MCF 10A (cell line): ENCODE measurements at regions of chr2 and their contacts with region 1.

Region 1: DNA sequence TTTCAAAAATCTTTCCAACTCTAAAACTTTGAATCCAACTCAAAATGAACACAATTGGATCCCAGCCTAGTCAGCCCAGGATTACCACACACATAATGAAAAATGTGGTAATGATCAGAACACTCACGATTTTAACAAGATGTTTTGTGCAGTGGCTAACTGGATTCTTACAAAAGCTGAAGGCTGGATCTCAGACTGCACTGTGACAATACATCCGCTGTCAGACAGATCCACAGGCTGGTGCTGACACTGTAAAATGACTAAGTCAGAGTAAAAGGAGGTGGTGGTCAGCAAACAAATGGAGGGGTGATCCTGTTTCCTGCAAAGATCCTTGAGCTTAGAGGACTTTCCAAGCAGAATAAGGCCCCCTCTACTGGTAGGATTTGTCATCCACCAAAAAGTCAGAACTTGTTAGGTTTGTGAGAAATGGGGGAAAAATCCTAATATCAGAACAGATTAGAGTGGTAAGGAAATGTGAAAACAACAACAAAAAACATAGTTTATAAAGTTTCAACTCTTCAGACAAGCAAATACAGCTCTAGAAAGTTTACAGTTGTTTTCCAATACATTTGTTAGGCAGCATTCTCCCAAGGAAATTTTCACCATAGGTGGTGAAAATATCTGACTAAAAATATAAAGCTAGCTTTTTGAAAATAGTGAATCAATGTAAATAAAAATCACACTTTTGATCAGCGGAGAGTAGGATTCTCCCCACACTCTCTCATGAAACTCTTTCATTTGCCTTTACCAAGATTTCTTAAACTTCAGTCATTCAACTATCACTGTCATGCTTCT is 211.9 kb downstream of the AGPS start:
- DNase-seq: peak; percentile 58
- H3K4me3 Mint-ChIP-seq: no peak overlapping the region
- H3K27ac Mint-ChIP-seq: no peak overlapping the region
- H3K4me1 Mint-ChIP-seq: peaks cover 5% of the 10 kb centered on the region
- H3K27me3 Mint-ChIP-seq: peaks cover 5% of the 10 kb centered on the region
- CTCF ChIP-seq: peak; percentile 42

Region 2: GRCh38 chr2:177489719-177490301 is 114.7 kb before region 1 on chr2:
- CTCF ChIA-PET with region 1: interaction called, 8 read pairs
- POLR2A ChIA-PET with region 1: no interaction called
- intact Hi-C with region 1: loop called (anchors 1 kb)
- DNase-seq: peak; percentile 52
- H3K4me3 Mint-ChIP-seq: no peak overlapping the region
- H3K27ac Mint-ChIP-seq: no peak overlapping the region
- H3K4me1 Mint-ChIP-seq: no peaks in the 10 kb centered on the region
- H3K27me3 Mint-ChIP-seq: no peaks in the 10 kb centered on the region
- CTCF ChIP-seq: peak; percentile 55

Region 3: DNA sequence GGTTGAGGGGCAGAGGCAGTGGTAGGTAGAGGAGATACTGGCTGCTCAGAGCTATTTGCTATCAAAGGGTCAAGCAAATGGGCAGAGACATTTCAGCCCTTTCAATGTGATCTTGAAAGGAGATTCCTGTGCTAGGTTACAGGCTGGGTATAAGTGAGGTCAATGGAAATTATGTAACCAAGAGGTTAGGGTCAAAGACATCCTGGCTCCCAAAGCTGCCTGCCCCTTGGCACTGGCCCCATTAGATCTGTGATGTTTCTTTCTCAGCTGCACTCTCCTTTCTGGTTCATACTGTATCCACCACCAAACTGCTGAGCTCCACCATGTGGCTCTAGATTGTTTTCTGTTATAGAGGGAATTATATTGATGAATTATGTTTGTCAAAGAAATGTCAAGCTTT is 11.5 kb before region 1 on chr2:
- CTCF ChIA-PET with region 1: interaction called, 12 read pairs
- POLR2A ChIA-PET with region 1: no interaction called
- intact Hi-C with region 1: no loop called
- DNase-seq: no peak
- H3K4me3 Mint-ChIP-seq: no peak overlapping the region
- H3K27ac Mint-ChIP-seq: no peak overlapping the region
- H3K4me1 Mint-ChIP-seq: no peaks in the 10 kb centered on the region
- H3K27me3 Mint-ChIP-seq: peaks cover 6% of the 10 kb centered on the region
- CTCF ChIP-seq: no peak

Region 4: DNA sequence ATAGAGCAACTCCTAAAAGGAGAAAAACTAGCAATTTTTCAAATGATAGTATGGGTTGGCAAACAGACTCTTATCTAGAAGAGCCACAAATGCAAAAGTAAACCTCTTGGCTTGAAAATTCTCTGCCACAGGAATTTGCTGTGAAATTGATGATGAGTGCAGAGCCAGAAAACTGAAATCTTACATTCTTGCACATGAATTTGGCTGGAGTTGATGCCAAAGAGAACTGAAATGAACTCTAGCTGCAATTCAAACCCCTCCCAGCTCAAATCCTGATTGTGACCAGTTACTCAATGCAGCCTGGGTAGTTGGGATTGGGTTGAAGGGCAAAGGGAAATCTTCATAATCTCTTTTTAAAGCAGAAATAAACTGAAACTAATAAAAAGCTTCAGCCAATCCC is 201.6 kb after region 1 on chr2:
- CTCF ChIA-PET with region 1: no interaction called
- POLR2A ChIA-PET with region 1: no interaction called
- intact Hi-C with region 1: no loop called
- DNase-seq: no peak
- H3K4me3 Mint-ChIP-seq: no peak overlapping the region
- H3K27ac Mint-ChIP-seq: no peak overlapping the region
- H3K4me1 Mint-ChIP-seq: no peaks in the 10 kb centered on the region
- H3K27me3 Mint-ChIP-seq: peaks cover 66% of the 10 kb centered on the region
- CTCF ChIP-seq: no peak